HEK293T (cell line): ENCODE measurements at regions of chr1 and their contacts with region 1.

Region 1: DNA sequence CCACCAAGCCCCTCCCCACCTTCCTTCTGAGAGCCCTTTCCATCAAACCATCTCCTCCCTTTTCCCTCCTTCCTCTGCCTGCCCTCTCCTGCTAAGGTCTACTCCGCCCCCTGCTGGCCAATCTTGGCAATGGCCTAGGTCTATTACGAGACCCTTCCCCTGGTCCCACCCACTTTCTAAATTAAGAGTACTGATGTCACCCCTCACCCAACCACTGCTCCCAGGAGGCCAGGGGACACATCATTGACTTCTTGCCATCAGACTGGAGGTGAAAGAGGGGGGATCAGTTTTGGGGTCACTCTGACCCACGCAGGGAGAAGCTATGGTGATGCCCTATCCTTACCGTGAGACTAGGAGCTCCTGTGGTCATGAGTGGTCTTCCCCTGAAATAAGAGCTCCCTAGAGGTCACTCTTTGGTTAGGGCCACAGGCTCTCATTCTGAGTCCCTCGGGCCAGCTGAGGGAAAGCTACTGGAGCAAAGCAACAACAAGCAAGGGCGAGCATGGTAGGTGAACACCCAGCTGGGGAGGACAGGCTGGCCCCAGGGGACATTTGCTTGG is 34.6 kb upstream of the S100A7 start:
- DNase-seq: peak; percentile 83

Region 2: GRCh38 chr1:153352523-153352922 is 142.5 kb before region 1 on chr1:
- CTCF ChIA-PET with region 1: interaction called, 98 read pairs
- POLR2A ChIA-PET with region 1: interaction called, 5 read pairs
- DNase-seq: peak; percentile 81

Region 3: GRCh38 chr1:153465811-153466636 is 29.0 kb before region 1 on chr1:
- CTCF ChIA-PET with region 1: interaction called, 21 read pairs
- POLR2A ChIA-PET with region 1: no interaction called
- DNase-seq: peak; percentile 85

Region 4: GRCh38 chr1:153478692-153479618 is 16.1 kb before region 1 on chr1:
- CTCF ChIA-PET with region 1: interaction called, 22 read pairs
- POLR2A ChIA-PET with region 1: no interaction called
- DNase-seq: no peak